CD8-positive, alpha-beta T cell (primary cell): ENCODE measurements at regions of chr7 and their contacts with region 1.

Region 1: GRCh38 chr7:157625973-157626742 is 289.4 kb downstream of the DNAJB6 start:
- DNase-seq: peak in 3 of 9 experiments; percentile 27 to 77 (median 49)
- ATAC-seq: peak; percentile 63
- H3K4me3 ChIP-seq: peak overlapping the region in 1 of 2 experiments; percentile 6
- H3K4me3 Mint-ChIP-seq: peak overlapping the region; percentile 73
- H3K27ac ChIP-seq: no peak overlapping the region
- H3K27ac Mint-ChIP-seq: peak overlapping the region; percentile 83
- H3K4me1 ChIP-seq: peaks cover 66% of the 10 kb centered on the region
- H3K4me1 Mint-ChIP-seq: peaks cover 70% of the 10 kb centered on the region
- H3K27me3 ChIP-seq: no peaks in the 10 kb centered on the region
- H3K27me3 Mint-ChIP-seq: peaks cover 10% of the 10 kb centered on the region
- CTCF ChIP-seq: no peak

Region 2: DNA sequence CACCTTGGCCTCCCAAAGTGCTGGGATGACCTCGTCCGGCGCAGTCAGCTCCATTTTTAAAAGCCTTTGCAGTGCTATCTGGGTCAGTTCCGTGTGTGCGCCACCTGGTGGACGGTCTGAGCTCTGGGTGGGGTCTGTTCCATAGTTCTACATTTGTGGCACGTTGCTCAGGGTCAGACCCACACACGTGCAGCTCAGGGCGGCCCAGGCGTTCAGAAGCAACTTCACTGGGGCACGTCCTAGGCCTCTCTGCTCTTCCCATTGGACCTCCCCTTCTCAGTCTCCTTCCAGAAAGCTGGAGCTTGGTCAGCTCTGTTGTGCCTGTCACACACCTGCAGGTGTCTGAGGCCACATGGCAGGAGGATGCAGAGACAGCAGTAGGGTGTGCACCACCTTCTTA is 151.5 kb before region 1 on chr7:
- CTCF ChIA-PET with region 1: interaction called, 3 read pairs
- POLR2A ChIA-PET with region 1: no interaction called
- intact Hi-C with region 1: loop called in 1 of 2 experiments (anchors 2 kb)
- DNase-seq: peak in 4 of 9 experiments; percentile 31 to 57 (median 44)
- ATAC-seq: no peak
- H3K4me3 ChIP-seq: no peak overlapping the region
- H3K4me3 Mint-ChIP-seq: no peak overlapping the region
- H3K27ac ChIP-seq: no peak overlapping the region
- H3K27ac Mint-ChIP-seq: no peak overlapping the region
- H3K4me1 ChIP-seq: peaks cover 40% of the 10 kb centered on the region
- H3K4me1 Mint-ChIP-seq: peaks cover 54% of the 10 kb centered on the region
- H3K27me3 ChIP-seq: no peaks in the 10 kb centered on the region
- H3K27me3 Mint-ChIP-seq: no peaks in the 10 kb centered on the region
- CTCF ChIP-seq: no peak

Region 3: DNA sequence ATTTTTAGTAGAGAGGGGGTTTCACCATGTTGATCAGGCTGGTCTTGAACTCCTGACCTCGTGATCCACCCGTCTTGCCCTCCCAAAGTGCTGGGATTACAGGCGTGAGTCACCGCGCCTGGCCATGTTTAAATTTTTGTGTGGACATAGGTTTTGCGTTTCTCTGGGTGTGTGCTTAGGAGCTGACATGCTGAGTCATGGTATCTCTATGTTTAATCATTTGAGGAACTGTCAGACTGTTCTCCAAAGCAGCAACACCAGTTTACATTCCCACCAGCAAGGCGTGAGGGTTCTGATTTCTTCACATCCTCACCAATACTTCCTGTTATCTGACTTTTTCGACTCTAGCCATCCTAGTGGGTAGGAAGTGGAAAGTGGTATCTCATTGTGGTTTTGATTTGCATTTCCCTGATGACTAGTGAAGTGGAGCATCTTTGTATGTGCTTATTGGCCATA is 135.7 kb before region 1 on chr7:
- CTCF ChIA-PET with region 1: no interaction called
- POLR2A ChIA-PET with region 1: no interaction called
- intact Hi-C with region 1: loop called in 1 of 2 experiments (anchors 5 kb)
- DNase-seq: peak in 7 of 9 experiments; percentile 30 to 88 (median 54)
- ATAC-seq: peak; percentile 89
- H3K4me3 ChIP-seq: no peak overlapping the region
- H3K4me3 Mint-ChIP-seq: peak overlapping the region; percentile 27
- H3K27ac ChIP-seq: no peak overlapping the region
- H3K27ac Mint-ChIP-seq: peak overlapping the region; percentile 84
- H3K4me1 ChIP-seq: peaks cover 21% of the 10 kb centered on the region
- H3K4me1 Mint-ChIP-seq: peaks cover 29% of the 10 kb centered on the region
- H3K27me3 ChIP-seq: peaks cover 0 to 3% of the 10 kb centered on the region in 2 experiments
- H3K27me3 Mint-ChIP-seq: no peaks in the 10 kb centered on the region
- CTCF ChIP-seq: no peak

Region 4: GRCh38 chr7:157568770-157569584 is 57.2 kb before region 1 on chr7:
- CTCF ChIA-PET with region 1: no interaction called
- POLR2A ChIA-PET with region 1: no interaction called
- intact Hi-C with region 1: loop called in 1 of 2 experiments (anchors 1 kb)
- DNase-seq: peak; percentile 26 to 83 (median 62)
- ATAC-seq: peak; percentile 80
- H3K4me3 ChIP-seq: peak overlapping the region; percentile 40 to 52
- H3K4me3 Mint-ChIP-seq: peak overlapping the region; percentile 89
- H3K27ac ChIP-seq: peak overlapping the region in 1 of 2 experiments; percentile 20
- H3K27ac Mint-ChIP-seq: peak overlapping the region; percentile 79
- H3K4me1 ChIP-seq: peaks cover 16% of the 10 kb centered on the region
- H3K4me1 Mint-ChIP-seq: peaks cover 22% of the 10 kb centered on the region
- H3K27me3 ChIP-seq: peaks cover 0 to 6% of the 10 kb centered on the region in 2 experiments
- H3K27me3 Mint-ChIP-seq: peaks cover 2% of the 10 kb centered on the region
- CTCF ChIP-seq: no peak

Region 5: DNA sequence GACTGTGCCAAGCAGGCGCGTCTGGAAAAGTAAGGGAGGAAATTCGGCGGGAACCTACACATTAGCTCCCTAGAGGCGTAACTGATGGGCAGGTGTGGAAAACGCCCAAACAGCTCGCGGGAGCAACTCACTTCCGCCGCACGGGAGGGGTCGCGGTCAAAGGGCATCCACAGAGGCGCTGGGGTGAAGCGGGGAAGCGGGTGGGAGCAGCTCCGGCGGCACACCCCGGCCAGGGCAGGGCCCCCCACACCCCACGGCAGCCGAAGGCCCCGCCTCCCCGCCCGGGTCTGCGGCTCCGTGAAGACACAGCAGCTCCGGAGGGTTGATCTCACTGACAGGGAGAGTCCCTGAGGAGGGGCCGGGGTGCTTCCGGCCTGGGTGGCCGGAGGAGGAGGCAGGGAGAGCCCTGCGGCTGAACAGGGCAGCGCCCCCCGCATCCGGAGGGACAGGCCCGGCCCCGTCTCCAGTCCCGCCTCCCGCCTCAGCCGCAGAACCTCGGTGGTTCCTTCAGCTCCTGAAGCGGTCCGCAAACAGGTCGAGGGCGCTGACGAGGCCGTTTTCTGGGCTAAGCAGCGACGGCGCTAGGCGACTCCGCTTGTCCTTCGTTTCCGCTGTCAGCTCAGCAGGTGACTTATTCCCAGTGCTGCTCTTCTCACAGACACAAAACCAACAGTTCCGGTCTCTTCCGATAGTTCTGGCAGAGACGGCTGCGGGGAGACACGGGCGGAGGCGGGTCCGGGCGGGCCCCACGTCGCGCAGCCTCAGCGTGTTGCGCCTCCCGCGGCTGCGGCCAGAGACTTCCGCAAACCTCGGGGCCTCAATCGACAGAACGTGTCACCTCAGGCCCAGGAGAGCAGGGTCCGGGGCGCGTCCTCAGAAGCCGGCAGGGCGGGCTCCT is 13.2 kb before region 1 on chr7:
- CTCF ChIA-PET with region 1: interaction called, 4 read pairs
- POLR2A ChIA-PET with region 1: interaction called, 4 read pairs
- intact Hi-C with region 1: loop called in 1 of 2 experiments (anchors 1 kb)
- DNase-seq: peak; percentile 32 to 85 (median 74)
- ATAC-seq: peak; percentile 79
- H3K4me3 ChIP-seq: peak overlapping the region; percentile 58 to 70
- H3K4me3 Mint-ChIP-seq: peak overlapping the region; percentile 87
- H3K27ac ChIP-seq: peak overlapping the region in 1 of 2 experiments; percentile 53
- H3K27ac Mint-ChIP-seq: peak overlapping the region; percentile 80
- H3K4me1 ChIP-seq: peaks cover 19% of the 10 kb centered on the region
- H3K4me1 Mint-ChIP-seq: peaks cover 20% of the 10 kb centered on the region
- H3K27me3 ChIP-seq: no peaks in the 10 kb centered on the region
- H3K27me3 Mint-ChIP-seq: no peaks in the 10 kb centered on the region
- CTCF ChIP-seq: no peak

Region 6: GRCh38 chr7:157875230-157876179 is 249.3 kb after region 1 on chr7:
- CTCF ChIA-PET with region 1: no interaction called
- POLR2A ChIA-PET with region 1: no interaction called
- intact Hi-C with region 1: loop called in 1 of 2 experiments (anchors 10 kb)
- DNase-seq: peak in 8 of 9 experiments; percentile 29 to 72 (median 55)
- ATAC-seq: peak; percentile 78
- H3K4me3 ChIP-seq: peak overlapping the region; percentile 15 to 16
- H3K4me3 Mint-ChIP-seq: peak overlapping the region; percentile 84
- H3K27ac ChIP-seq: no peak overlapping the region
- H3K27ac Mint-ChIP-seq: peak overlapping the region; percentile 53
- H3K4me1 ChIP-seq: peaks cover 38% of the 10 kb centered on the region
- H3K4me1 Mint-ChIP-seq: peaks cover 35% of the 10 kb centered on the region
- H3K27me3 ChIP-seq: no peaks in the 10 kb centered on the region
- H3K27me3 Mint-ChIP-seq: no peaks in the 10 kb centered on the region
- CTCF ChIP-seq: peak; percentile 69